ENCODE measurements at regions of chr10 and their contacts with region 1.

Region 1: GRCh38 chr10:28733647-28734046 is 56.3 kb downstream of the BAMBI start:
- DNase-seq: no peak
- H3K27ac ChIP-seq: no peak overlapping the region
- CTCF ChIP-seq: no peak

Region 2: DNA sequence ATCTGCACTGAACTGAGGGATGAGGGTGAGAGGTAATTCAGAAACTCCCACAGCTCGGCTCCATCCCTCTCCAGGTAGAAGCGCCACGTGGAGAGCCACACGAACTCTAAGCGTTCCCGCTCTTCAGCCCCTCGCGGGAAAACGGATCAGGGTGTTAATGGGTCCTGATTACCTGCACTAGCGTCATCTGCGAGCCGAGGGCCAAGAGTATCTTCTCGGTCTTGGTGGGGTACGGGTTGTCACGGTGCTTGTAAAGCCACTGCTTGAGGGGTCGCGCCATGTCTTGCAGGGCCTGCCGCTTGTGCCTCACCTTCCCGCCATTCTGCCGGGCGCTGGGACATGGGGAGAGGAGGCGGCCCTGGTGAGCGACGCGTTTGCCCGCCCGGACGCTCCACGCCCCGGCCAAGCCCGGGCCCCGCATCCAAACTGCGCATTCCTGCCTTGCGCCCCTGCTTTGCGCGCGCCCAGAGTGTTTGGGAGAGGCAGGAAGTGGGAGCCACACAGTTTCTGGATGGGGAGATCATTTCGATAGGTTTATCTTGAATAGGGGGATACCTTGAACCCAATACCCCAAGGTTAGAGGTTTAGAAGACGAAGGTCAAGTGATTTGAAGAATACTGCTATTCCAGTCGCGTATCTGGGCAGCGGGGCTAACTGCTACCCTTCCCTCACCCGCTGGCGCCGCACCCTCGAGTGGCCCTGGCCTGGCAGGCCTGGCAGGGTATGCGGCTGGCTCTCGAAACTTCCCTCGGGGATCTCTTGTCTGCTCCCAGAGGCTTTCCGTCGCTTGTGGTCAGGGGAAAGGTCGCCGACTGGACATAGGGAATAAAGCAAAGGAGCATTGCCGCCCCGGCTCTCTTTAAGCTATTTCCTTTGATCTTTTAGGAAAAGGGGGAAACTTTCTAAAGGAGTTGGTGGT is 992.2 kb before region 1 on chr10:
- CTCF ChIA-PET with region 1: interaction called, 12 read pairs
- POLR2A ChIA-PET with region 1: no interaction called
- DNase-seq: no peak
- H3K27ac ChIP-seq: peak overlapping the region; percentile 99
- CTCF ChIP-seq: no peak